ENCODE measurements at regions of chr15 and their contacts with region 1.

Region 1: DNA sequence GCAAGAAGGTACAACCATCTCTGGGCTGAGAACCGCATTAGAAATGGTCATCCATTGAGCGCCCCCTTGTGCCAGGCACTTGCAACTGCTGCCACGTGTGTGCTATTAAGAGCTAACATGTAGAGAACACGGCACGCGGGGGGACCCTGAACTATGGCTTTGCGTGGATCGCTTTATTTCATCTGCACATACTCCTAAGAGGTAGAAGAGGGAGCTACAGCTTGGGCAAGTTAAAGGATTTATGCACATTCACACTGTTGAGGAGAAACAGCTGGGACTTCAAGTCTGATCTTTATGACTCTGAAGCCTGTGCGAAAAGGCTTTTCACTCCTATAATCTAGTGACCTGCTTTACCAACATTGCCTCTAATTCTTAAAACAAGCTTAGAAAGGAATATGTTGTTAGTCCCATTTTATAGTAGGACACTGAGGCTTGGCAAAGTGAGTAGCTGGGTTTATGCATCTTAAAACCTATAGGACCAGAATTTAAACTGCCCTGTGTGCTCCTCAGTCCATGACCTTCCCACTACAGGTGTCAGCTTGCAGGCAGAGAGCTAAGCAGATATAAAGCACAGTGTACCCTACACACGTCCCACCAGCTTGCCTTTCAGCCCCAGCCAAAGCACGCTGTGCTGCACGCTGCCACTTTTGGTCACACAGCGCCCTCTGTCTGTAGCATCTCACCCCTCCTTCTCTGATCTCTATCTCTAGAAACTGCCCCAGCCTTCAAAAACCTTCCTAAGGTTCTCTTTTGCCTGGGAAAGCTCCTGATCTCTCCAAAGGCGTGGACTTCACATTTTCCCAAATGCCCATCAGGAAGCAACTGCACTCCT is 57.8 kb downstream of the STARD5 start:
- DNase-seq: peak; percentile 78
- H3K4me3 ChIP-seq: peak overlapping the region; percentile 18
- H3K27ac ChIP-seq: no peak overlapping the region
- H3K4me1 ChIP-seq: peaks cover 20% of the 10 kb centered on the region
- H3K27me3 ChIP-seq: peaks cover 10% of the 10 kb centered on the region
- CTCF ChIP-seq: peak; percentile 83

Region 2: DNA sequence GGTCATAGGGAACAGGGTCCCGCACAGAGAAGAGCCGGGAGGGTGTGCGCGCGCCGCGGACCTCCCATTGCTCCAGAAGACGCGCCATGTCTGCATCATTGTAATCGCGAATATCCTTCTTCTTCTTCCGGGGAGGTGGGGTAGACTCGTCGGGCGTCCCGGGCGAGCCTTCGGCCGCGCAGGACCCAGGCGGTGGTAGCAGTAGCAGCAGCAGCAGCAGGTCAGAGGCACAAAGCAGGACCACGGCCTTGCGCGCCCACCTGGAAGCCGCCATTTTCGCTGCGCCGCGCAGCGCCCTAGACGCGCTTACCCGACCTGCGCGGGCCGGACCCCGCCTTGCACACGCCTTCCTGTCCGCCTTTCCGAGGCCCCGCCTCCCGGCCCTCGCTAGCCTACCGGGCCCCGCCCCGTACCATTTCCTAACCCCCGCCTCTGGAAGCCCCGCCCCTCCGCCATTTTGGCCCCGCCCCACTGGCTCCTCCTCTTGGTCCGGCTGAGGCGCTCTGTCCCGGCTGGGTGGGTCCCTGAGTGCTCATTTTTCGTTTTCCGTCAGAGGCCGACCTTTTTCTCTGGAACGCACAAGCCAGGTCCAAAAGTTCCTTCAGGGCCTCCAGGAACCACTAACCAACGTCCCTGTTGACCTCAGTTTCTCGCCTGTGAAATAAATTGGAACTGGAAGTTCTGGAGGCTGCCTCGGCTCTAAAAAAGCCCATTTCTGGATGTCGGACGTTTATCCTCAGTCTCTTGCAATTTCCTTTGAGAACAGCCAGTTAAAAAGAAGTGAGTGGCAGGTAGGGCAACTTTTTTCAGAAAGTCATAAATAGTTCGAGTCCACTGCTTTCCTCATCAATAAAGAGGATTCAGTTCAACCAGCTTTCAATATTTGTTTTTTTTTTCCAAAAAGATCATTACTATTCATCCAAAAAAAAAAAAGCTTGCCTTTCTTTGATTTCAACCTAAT is 276.4 kb before region 1 on chr15 and contains the start of gene MESD:
- intact Hi-C with region 1: loop called (anchors 10 kb)
- DNase-seq: peak; percentile 99
- H3K4me3 ChIP-seq: peak within 1 kb of the TSS; percentile 92
- H3K27ac ChIP-seq: peak within 1 kb of the TSS; percentile 94
- H3K4me1 ChIP-seq: peaks cover 73% of the 10 kb centered on the region
- H3K27me3 ChIP-seq: no peaks in the 10 kb centered on the region
- CTCF ChIP-seq: no peak
- total RNA-seq, gene MESD: 13.5 TPM

Region 3: GRCh38 chr15:81106560-81106959 is 159.6 kb before region 1 on chr15:
- intact Hi-C with region 1: loop called (anchors 5 kb)
- DNase-seq: no peak
- H3K4me3 ChIP-seq: no peak overlapping the region
- H3K27ac ChIP-seq: no peak overlapping the region
- H3K4me1 ChIP-seq: peaks cover 31% of the 10 kb centered on the region
- H3K27me3 ChIP-seq: no peaks in the 10 kb centered on the region
- CTCF ChIP-seq: peak; percentile 85

Region 4: GRCh38 chr15:81152339-81152738 is 113.8 kb before region 1 on chr15:
- intact Hi-C with region 1: loop called (anchors 5 kb)
- DNase-seq: no peak
- H3K4me3 ChIP-seq: no peak overlapping the region
- H3K27ac ChIP-seq: no peak overlapping the region
- H3K4me1 ChIP-seq: peaks cover 10% of the 10 kb centered on the region
- H3K27me3 ChIP-seq: no peaks in the 10 kb centered on the region
- CTCF ChIP-seq: no peak

Region 5: GRCh38 chr15:81516461-81516860 is 250.3 kb after region 1 on chr15:
- intact Hi-C with region 1: no loop called
- DNase-seq: no peak
- H3K4me3 ChIP-seq: no peak overlapping the region
- H3K27ac ChIP-seq: no peak overlapping the region
- H3K4me1 ChIP-seq: no peaks in the 10 kb centered on the region
- H3K27me3 ChIP-seq: no peaks in the 10 kb centered on the region
- CTCF ChIP-seq: no peak

Measured in left ventricle myocardium inferior (tissue), 1 donor.